Ovary (tissue), 10 donors: ENCODE measurements at regions of chr22 and their contacts with region 1.

Region 1: GRCh38 chr22:35627264-35628041 is 10.3 kb upstream of the MB start:
- DNase-seq: peak; percentile 83 to 90 (median 88)
- H3K4me3 ChIP-seq: peak overlapping the region; percentile 52
- H3K27ac ChIP-seq: peak overlapping the region; percentile 76 to 94
- H3K4me1 ChIP-seq: peaks cover 5% of the 10 kb centered on the region
- H3K27me3 ChIP-seq: no peaks in the 10 kb centered on the region
- CTCF ChIP-seq: peak; percentile 2 to 53 (median 49)
- EP300 ChIP-seq: peak; percentile 52
- POLR2A ChIP-seq: no peak

Region 2: DNA sequence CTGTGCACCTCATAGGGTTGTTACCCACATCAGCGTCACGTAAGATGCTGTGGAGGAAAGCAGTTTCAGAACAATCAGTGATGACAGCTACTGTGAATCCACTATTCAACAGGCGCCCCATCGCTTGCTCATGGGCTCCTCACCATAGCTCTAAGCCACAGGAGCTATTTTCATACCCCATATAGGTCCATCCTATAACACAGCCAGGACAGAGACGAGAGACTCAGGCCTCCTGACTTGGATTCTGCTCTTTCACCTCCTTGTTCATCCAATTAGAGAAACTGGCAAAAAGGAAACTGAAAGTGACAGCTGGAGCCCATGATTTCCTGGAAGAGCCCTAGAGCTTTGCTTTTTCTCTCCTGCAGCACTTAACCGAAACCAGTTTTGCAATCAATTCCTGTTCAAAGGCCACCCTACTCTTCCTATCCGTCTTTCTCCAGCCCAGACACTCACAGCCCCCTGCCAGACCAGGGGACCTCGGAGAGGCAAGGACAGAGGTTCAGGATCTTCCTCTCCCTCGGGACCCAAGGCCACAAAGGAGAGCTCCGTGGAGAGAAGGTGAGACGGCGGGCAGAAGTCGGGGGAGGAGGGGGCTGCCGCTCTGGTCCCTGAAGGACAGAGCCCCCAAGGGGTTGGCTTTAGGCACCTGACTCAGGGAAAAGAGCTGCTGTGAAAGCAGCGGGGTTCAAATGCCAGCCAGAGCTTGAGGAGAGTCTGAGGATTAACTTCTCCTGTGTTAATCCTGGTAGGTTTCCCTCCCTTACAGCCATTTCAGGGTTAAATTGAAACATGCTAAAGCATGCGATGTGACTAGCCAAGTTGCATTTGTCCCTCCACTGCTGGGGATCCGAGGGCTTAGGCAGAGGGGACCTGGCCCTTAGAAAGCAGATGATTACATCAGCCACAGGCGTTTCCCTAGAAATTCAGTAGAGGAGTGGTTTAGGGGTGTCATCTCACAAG is 20.9 kb after region 1 on chr22 and contains the start of gene APOL6:
- intact Hi-C with region 1: no loop called
- DNase-seq: peak in 3 of 5 donors; percentile 55 to 61 (median 56)
- H3K4me3 ChIP-seq: peak within 1 kb of the TSS; percentile 82
- H3K27ac ChIP-seq: peak within 1 kb of the TSS; percentile 38 to 92
- H3K4me1 ChIP-seq: peaks cover 27% of the 10 kb centered on the region
- H3K27me3 ChIP-seq: no peaks in the 10 kb centered on the region
- CTCF ChIP-seq: no peak
- EP300 ChIP-seq: no peak
- POLR2A ChIP-seq: peak; percentile 40
- total RNA-seq, gene APOL6: 11.1 to 34.1 (median 21.4) TPM

Region 3: GRCh38 chr22:35684270-35684700 is 56.8 kb after region 1 on chr22:
- intact Hi-C with region 1: no loop called
- DNase-seq: peak in 1 of 5 donors; percentile 32
- H3K4me3 ChIP-seq: no peak overlapping the region
- H3K27ac ChIP-seq: no peak overlapping the region
- H3K4me1 ChIP-seq: no peaks in the 10 kb centered on the region
- H3K27me3 ChIP-seq: no peaks in the 10 kb centered on the region
- CTCF ChIP-seq: no peak
- EP300 ChIP-seq: no peak
- POLR2A ChIP-seq: no peak

Region 4: DNA sequence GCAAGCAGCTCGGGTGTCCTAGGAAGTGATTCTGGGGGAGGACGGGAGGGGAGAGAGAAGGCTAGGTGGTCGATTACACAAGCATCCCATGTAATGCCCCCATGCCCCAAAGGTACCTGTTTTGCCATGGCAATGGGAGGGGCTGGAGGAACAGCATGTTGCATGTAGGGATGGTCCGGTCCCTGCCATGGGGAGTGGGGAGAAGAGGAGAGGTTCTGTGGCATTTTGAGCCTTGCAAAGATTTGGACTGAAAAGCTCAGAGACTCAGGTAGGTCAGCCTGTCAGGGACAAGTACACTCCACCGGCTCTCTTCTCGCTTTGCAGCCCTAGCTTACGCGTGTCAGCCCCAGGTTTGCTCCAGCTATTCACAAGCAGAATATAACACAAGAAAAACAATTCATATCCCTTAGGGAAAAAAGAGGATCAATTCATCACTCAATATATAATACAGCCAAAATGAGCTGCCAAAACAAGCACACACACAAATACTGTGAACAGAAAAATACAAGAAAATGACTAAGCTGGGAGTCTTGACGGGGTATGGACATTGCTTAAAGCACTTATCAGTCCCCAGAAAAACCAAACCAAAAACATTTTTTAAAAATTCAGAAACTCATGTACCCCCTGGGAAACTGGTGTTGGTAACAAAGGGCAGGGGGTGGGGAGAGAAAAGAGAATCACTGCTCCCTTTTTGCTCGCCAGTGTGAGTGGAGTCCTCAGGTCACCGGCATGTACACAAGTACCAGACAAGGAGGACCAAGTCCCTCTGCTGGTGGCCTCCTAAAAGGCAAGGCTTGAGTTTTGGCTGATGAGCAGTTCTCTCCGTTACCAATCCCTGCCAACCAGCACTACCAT is 111.8 kb after region 1 on chr22:
- intact Hi-C with region 1: loop called in 1 of 4 experiments (anchors 10 kb)
- DNase-seq: no peak
- H3K4me3 ChIP-seq: no peak overlapping the region
- H3K27ac ChIP-seq: no peak overlapping the region
- H3K4me1 ChIP-seq: peaks cover 2% of the 10 kb centered on the region
- H3K27me3 ChIP-seq: no peaks in the 10 kb centered on the region
- CTCF ChIP-seq: peak in 1 of 3 donors; percentile 30
- EP300 ChIP-seq: no peak
- POLR2A ChIP-seq: no peak

Region 5: GRCh38 chr22:35914665-35915476 is 287.4 kb after region 1 on chr22:
- intact Hi-C with region 1: loop called (anchors 2 to 10 kb)
- DNase-seq: peak in 2 of 5 donors; percentile 41 to 65
- H3K4me3 ChIP-seq: peak overlapping the region; percentile 44
- H3K27ac ChIP-seq: peak overlapping the region; percentile 13 to 49
- H3K4me1 ChIP-seq: peaks cover 31% of the 10 kb centered on the region
- H3K27me3 ChIP-seq: no peaks in the 10 kb centered on the region
- CTCF ChIP-seq: no peak
- EP300 ChIP-seq: no peak
- POLR2A ChIP-seq: no peak

Region 6: DNA sequence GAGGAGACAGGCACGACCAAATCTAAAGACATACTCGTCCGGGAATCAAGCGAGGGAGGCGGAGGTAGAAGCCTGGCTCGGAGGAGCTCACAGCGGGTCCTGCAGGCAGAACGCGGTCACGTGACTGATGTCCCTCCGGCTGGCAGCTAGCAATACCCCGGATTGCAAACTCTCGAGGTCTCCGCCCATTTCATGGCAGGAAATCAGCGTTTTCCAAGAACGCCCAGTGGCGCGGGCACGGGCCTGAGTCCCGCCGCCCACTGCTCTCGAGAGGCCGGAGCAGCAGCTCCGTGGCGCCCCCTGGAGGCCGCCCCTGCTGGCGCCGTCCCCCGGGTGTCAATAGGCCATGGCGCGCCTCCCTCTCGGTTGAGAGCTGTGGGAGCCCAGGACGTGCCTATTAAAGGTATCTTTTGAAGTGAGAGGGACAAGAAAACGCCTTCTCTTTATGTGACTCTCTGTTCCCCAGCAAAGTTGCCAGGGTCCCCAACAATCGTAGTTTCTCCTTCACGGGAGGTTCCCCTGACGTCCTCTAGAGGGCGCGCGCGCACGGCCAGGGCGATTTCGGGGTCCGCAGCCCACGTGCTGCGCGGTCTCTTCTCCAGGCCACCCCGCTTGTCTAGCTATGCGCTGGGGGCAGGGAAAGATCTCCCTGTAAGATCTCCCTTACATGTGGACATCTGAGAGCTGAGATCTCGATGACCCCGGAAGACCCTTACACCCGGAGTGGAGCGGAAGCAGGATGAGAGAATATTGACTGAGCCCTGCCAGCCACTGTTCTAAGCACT is 438.5 kb after region 1 on chr22:
- intact Hi-C with region 1: loop called in 2 of 4 experiments (anchors 5 kb)
- DNase-seq: peak; percentile 87 to 93 (median 91)
- H3K4me3 ChIP-seq: peak overlapping the region; percentile 45
- H3K27ac ChIP-seq: peak overlapping the region; percentile 30 to 82
- H3K4me1 ChIP-seq: no peaks in the 10 kb centered on the region
- H3K27me3 ChIP-seq: no peaks in the 10 kb centered on the region
- CTCF ChIP-seq: peak; percentile 99 to 100 (median 99)
- EP300 ChIP-seq: no peak
- POLR2A ChIP-seq: no peak